Caco-2 (cell line): ENCODE measurements at regions of chr3 and their contacts with region 1.

Region 1: GRCh38 chr3:7285505-7285904 is 424.6 kb downstream of the GRM7 start:
- DNase-seq: peak in 1 of 2 experiments; percentile 2
- H3K4me3 ChIP-seq: no peak overlapping the region
- H3K4me3 Mint-ChIP-seq: no peak overlapping the region
- H3K27ac Mint-ChIP-seq: no peak overlapping the region
- H3K4me1 ChIP-seq: no peaks in the 10 kb centered on the region
- H3K4me1 Mint-ChIP-seq: no peaks in the 10 kb centered on the region
- H3K27me3 ChIP-seq: no peaks in the 10 kb centered on the region
- H3K27me3 Mint-ChIP-seq: no peaks in the 10 kb centered on the region
- CTCF ChIP-seq: no peak

Region 2: GRCh38 chr3:7241584-7242302 is 43.8 kb before region 1 on chr3:
- CTCF ChIA-PET with region 1: no interaction called
- POLR2A ChIA-PET with region 1: no interaction called
- intact Hi-C with region 1: no loop called
- DNase-seq: no peak
- H3K4me3 ChIP-seq: no peak overlapping the region
- H3K4me3 Mint-ChIP-seq: no peak overlapping the region
- H3K27ac Mint-ChIP-seq: no peak overlapping the region
- H3K4me1 ChIP-seq: no peaks in the 10 kb centered on the region
- H3K4me1 Mint-ChIP-seq: no peaks in the 10 kb centered on the region
- H3K27me3 ChIP-seq: no peaks in the 10 kb centered on the region
- H3K27me3 Mint-ChIP-seq: no peaks in the 10 kb centered on the region
- CTCF ChIP-seq: no peak

Region 3: DNA sequence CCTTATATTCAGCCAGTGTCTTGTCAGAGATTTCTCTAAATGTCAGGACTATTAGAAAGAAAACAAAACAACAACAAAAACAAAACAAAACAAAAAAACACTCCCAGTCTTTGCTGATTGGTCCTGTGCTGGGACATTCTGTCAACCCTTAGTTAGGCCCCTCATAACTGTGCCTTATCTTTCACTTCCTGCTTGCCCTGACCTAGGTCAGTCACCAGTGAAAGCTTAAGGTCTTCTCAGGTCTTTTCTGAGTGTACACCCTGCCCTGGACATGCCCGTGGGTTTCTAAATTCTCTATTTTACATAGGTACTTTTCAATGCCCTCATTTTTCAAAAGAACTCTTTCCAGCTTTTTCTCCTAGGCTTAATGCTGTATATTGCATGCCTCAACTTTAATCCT is 29.5 kb after region 1 on chr3:
- CTCF ChIA-PET with region 1: no interaction called
- POLR2A ChIA-PET with region 1: no interaction called
- intact Hi-C with region 1: no loop called
- DNase-seq: no peak
- H3K4me3 ChIP-seq: no peak overlapping the region
- H3K4me3 Mint-ChIP-seq: no peak overlapping the region
- H3K27ac Mint-ChIP-seq: no peak overlapping the region
- H3K4me1 ChIP-seq: no peaks in the 10 kb centered on the region
- H3K4me1 Mint-ChIP-seq: no peaks in the 10 kb centered on the region
- H3K27me3 ChIP-seq: no peaks in the 10 kb centered on the region
- H3K27me3 Mint-ChIP-seq: peaks cover 7% of the 10 kb centered on the region
- CTCF ChIP-seq: no peak

Region 4: GRCh38 chr3:7421065-7421464 is 135.6 kb after region 1 on chr3:
- CTCF ChIA-PET with region 1: no interaction called
- POLR2A ChIA-PET with region 1: no interaction called
- intact Hi-C with region 1: no loop called
- DNase-seq: no peak
- H3K4me3 ChIP-seq: no peak overlapping the region
- H3K4me3 Mint-ChIP-seq: no peak overlapping the region
- H3K27ac Mint-ChIP-seq: no peak overlapping the region
- H3K4me1 ChIP-seq: no peaks in the 10 kb centered on the region
- H3K4me1 Mint-ChIP-seq: no peaks in the 10 kb centered on the region
- H3K27me3 ChIP-seq: no peaks in the 10 kb centered on the region
- H3K27me3 Mint-ChIP-seq: no peaks in the 10 kb centered on the region
- CTCF ChIP-seq: no peak

Region 5: DNA sequence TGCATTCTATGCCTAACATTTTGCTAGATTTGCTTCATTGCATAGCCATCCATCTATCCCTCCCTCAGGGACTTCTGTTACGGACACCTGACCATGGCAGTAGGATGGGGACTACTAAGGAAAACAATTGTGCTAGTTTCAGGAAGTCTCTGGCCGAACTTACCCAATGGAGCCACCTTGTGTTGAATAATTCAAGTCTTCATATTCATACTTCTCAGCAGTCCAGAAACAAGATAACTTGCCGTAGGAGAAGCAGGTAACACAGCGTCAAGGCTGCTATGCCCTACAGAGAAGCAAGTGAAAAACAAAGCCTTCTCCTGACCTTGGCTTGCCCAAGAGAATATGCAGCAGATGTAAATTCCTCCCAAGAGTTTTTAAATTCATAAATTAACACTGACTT is 260.7 kb after region 1 on chr3:
- CTCF ChIA-PET with region 1: no interaction called
- POLR2A ChIA-PET with region 1: no interaction called
- intact Hi-C with region 1: loop called (anchors 1 kb)
- DNase-seq: peak in 1 of 2 experiments; percentile 2
- H3K4me3 ChIP-seq: no peak overlapping the region
- H3K4me3 Mint-ChIP-seq: no peak overlapping the region
- H3K27ac Mint-ChIP-seq: no peak overlapping the region
- H3K4me1 ChIP-seq: no peaks in the 10 kb centered on the region
- H3K4me1 Mint-ChIP-seq: no peaks in the 10 kb centered on the region
- H3K27me3 ChIP-seq: no peaks in the 10 kb centered on the region
- H3K27me3 Mint-ChIP-seq: peaks cover 5% of the 10 kb centered on the region
- CTCF ChIP-seq: no peak